ENCODE measurements at regions of chr7 and their contacts with region 1.

Region 1: DNA sequence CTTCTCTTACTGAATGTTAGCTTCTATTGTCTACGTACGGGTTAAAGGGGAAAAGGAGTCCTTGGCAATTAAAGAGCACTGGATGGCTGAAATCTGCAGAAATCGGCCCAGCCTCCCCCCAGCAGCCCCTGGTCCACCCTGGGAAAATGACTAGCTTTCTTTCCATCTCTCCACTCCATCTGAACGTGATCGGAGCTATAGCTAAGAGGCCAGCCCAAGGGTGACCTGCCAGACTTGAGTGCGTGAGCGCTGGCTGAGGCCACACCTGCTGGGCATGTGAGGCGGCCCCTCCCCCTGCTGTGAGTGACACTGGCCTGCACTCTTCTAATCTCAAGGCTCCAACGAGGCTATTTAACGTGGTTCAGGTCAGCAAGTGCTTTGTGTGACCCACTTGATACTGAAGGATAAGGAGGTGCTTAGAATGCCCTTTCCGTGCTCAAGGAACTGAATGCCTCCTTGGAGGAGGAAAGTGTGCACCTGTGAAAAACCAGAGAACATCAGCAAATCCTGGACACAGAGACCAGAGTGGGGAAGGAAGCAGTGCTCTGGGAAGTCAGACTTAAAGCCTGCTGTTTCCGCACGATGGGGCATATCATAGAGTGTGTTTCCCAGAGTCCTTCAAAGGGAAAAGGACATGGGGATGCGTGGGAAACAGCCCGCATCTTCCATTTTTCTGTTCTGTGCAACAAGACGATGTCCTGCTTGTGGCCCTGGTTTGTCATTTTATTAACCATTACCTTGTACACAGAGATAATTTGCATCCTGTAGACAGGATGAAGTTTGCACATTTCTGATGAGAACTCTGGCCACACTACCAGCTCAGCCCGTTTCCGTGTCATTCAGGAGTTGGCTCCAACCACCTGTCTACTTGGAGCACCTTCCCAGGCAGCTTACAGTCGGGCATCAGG is 12.5 kb upstream of the MNX1 start:
- DNase-seq: no peak
- ATAC-seq: no peak
- H3K4me3 ChIP-seq: no peak overlapping the region
- H3K4me3 Mint-ChIP-seq: peak overlapping the region in 2 of 10 donors; percentile 2 to 37
- H3K27ac ChIP-seq: no peak overlapping the region
- H3K27ac Mint-ChIP-seq: peak overlapping the region in 1 of 9 donors; percentile 12
- H3K4me1 ChIP-seq: no peaks in the 10 kb centered on the region
- H3K4me1 Mint-ChIP-seq: peaks cover 3 to 24% (median 14%) of the 10 kb centered on the region in 7 donors
- H3K27me3 ChIP-seq: peaks cover 6 to 23% of the 10 kb centered on the region in 2 donors
- H3K27me3 Mint-ChIP-seq: peaks cover 70 to 79% (median 78%) of the 10 kb centered on the region in 5 donors

Region 2: DNA sequence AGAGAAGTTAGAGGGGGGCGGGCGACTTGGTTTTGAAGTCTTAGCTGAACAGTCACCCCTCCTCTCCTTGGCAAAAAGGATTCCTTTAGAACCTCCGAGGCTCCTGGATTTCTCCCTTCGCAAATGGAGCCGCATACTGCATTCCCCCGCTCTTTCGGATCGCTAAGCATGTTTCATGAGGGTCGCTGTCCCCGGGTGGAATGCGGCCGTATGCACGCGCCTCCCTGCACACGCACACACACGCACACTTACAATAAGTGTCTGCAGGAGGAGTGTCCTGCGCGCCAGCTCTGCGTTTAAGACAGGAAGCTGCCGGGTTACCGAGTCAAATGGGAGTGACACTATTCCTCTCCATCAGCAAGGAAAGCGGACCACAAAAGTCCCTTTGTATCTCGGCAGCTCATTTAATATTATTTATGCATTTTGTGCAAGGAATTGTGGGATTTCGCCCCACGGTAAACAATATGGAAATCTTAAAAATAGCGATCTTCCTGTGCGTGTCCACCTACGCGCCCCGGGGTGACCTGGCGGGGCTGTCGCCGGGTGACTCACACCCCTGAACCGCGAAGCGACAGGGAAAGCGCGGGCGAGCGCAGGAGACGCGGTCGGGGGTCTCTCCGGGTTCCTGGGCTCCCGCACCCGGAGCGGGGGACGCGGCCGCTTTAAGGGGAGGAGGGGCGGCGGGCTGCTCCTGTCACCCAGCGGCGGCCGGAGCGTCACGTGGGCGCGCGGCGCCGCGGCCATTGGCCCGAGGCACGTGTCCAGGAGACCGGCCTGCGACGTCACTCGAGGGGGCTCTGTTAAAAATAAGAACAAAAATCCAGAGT is 1566.0 kb before region 1 on chr7:
- CTCF ChIA-PET with region 1: no interaction called
- POLR2A ChIA-PET with region 1: no interaction called
- intact Hi-C with region 1: loop called in 1 of 2 experiments (anchors 5 kb)
- DNase-seq: no peak
- ATAC-seq: no peak
- H3K4me3 ChIP-seq: peak overlapping the region; percentile 24
- H3K4me3 Mint-ChIP-seq: peak overlapping the region; percentile 50 to 87 (median 74)
- H3K27ac ChIP-seq: no peak overlapping the region
- H3K27ac Mint-ChIP-seq: peak overlapping the region in 1 of 9 donors; percentile 83
- H3K4me1 ChIP-seq: no peaks in the 10 kb centered on the region
- H3K4me1 Mint-ChIP-seq: peaks cover 7 to 34% (median 20%) of the 10 kb centered on the region in 7 donors
- H3K27me3 ChIP-seq: peaks cover 0 to 9% of the 10 kb centered on the region in 2 donors
- H3K27me3 Mint-ChIP-seq: peaks cover 50 to 80% (median 68%) of the 10 kb centered on the region in 5 donors

Region 3: GRCh38 chr7:155598810-155599210 is 1424.1 kb before region 1 on chr7:
- CTCF ChIA-PET with region 1: no interaction called
- POLR2A ChIA-PET with region 1: no interaction called
- intact Hi-C with region 1: no loop called
- DNase-seq: peak; percentile 52 to 86 (median 75)
- ATAC-seq: peak; percentile 90
- H3K4me3 ChIP-seq: no peak overlapping the region
- H3K4me3 Mint-ChIP-seq: peak overlapping the region in 2 of 10 donors; percentile 21 to 28
- H3K27ac ChIP-seq: no peak overlapping the region
- H3K27ac Mint-ChIP-seq: no peak overlapping the region
- H3K4me1 ChIP-seq: no peaks in the 10 kb centered on the region
- H3K4me1 Mint-ChIP-seq: peaks cover 0 to 9% (median 5%) of the 10 kb centered on the region in 7 donors
- H3K27me3 ChIP-seq: no peaks in the 10 kb centered on the region
- H3K27me3 Mint-ChIP-seq: peaks cover 26 to 38% (median 32%) of the 10 kb centered on the region in 5 donors

Region 4: DNA sequence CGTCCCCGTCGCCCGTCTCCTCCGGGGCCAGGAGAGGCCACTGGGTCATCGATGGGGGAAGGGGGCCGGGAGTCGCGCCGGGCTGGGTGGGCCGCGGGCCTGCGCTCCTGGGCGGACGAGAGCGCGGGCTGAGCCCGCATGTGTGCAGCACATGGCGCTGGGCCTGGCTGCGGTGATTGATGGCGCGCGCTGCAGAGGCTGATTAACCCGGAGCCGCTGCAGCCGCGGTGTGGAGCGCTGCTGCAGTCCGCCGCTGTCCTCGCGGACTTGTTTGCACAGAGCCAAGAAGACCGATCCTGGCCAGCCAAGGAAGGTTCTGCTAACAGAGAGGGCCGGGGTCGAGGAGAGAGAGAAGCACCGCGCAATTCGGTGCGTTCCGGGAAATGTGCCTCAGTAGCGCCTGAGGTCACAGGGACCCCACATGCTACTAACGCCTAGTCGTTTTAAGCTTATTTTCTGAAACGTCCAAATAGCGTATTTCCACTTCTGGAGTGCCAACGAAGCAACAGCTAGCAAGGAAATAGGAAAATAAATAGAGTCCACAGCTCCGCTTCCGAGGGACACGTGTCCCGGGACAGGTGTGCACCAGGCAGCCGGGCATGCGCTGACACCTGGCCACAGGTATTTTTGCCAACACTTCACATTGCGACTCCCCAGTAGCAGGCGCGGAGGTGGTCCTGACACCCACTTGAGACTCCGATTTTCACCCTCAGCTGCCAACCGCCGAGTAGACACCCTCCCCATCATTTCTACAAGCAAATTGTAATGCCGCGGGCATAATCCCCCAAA is 18.7 kb before region 1 on chr7:
- CTCF ChIA-PET with region 1: no interaction called
- POLR2A ChIA-PET with region 1: no interaction called
- intact Hi-C with region 1: loop called in 1 of 2 experiments (anchors 2 kb)
- DNase-seq: peak in 1 of 9 donors; percentile 20
- ATAC-seq: no peak
- H3K4me3 ChIP-seq: no peak overlapping the region
- H3K4me3 Mint-ChIP-seq: peak overlapping the region in 8 of 10 donors; percentile 8 to 56 (median 25)
- H3K27ac ChIP-seq: no peak overlapping the region
- H3K27ac Mint-ChIP-seq: peak overlapping the region in 1 of 9 donors; percentile 63
- H3K4me1 ChIP-seq: peaks cover 0 to 14% of the 10 kb centered on the region in 2 donors
- H3K4me1 Mint-ChIP-seq: peaks cover 13 to 32% (median 27%) of the 10 kb centered on the region in 7 donors
- H3K27me3 ChIP-seq: peaks cover 11 to 19% of the 10 kb centered on the region in 2 donors
- H3K27me3 Mint-ChIP-seq: peaks cover 52 to 79% (median 61%) of the 10 kb centered on the region in 5 donors

Region 5: GRCh38 chr7:157150882-157151281 is 127.9 kb after region 1 on chr7:
- CTCF ChIA-PET with region 1: no interaction called
- POLR2A ChIA-PET with region 1: no interaction called
- intact Hi-C with region 1: no loop called
- DNase-seq: no peak
- ATAC-seq: no peak
- H3K4me3 ChIP-seq: no peak overlapping the region
- H3K4me3 Mint-ChIP-seq: peak overlapping the region in 2 of 10 donors; percentile 12 to 17
- H3K27ac ChIP-seq: no peak overlapping the region
- H3K27ac Mint-ChIP-seq: peak overlapping the region in 2 of 9 donors; percentile 22 to 35
- H3K4me1 ChIP-seq: peaks cover 0 to 9% of the 10 kb centered on the region in 2 donors
- H3K4me1 Mint-ChIP-seq: peaks cover 42 to 89% (median 85%) of the 10 kb centered on the region in 7 donors
- H3K27me3 ChIP-seq: no peaks in the 10 kb centered on the region
- H3K27me3 Mint-ChIP-seq: no peaks in the 10 kb centered on the region